Activated CD4-positive, alpha-beta T cell treated with anti-CD3 and anti-CD28 coated beads for 36 hours (primary cell): ENCODE measurements at regions of chr11 and their contacts with region 1.

Region 1: DNA sequence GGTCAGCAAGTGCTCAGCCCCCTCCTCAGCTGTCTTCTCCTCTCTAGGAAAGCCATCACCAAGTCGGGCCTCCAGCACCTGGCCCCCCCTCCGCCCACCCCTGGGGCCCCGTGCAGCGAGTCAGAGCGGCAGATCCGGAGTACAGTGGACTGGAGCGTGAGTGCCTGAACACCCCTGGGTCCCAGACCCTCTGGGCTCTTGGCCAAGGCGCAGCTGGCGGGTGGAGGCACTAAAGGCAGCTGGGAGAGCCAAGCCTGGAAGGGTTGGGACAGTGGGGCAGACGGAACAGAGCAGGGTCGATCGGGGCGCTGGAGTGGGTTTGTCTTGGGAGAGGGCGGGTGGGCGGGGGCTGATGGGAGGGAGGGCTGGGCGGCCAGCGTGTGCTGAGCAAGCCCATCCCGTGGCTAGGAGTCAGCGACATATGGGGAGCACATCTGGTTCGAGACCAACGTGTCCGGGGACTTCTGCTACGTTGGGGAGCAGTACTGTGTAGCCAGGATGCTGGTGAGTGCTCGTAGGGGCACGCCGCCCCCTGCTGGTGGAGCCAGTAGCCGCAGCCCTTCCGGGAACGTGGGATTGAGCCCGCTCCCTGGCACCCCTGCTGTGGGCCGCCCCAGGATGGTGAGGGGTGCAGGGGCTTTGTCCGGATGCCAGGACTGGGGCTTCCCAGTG is 14.1 kb upstream of the MDK start:
- DNase-seq: peak; percentile 87
- ATAC-seq: peak; percentile 86
- H3K4me3 Mint-ChIP-seq: no peak overlapping the region
- H3K27ac Mint-ChIP-seq: peak overlapping the region; percentile 83
- H3K4me1 Mint-ChIP-seq: peaks cover 30% of the 10 kb centered on the region
- H3K27me3 Mint-ChIP-seq: no peaks in the 10 kb centered on the region

Region 2: GRCh38 chr11:46210133-46210636 is 157.2 kb before region 1 on chr11:
- CTCF ChIA-PET with region 1: no interaction called
- POLR2A ChIA-PET with region 1: no interaction called
- intact Hi-C with region 1: no loop called
- DNase-seq: peak; percentile 8
- ATAC-seq: peak; percentile 64
- H3K4me3 Mint-ChIP-seq: no peak overlapping the region
- H3K27ac Mint-ChIP-seq: no peak overlapping the region
- H3K4me1 Mint-ChIP-seq: peaks cover 11% of the 10 kb centered on the region
- H3K27me3 Mint-ChIP-seq: no peaks in the 10 kb centered on the region

Region 3: DNA sequence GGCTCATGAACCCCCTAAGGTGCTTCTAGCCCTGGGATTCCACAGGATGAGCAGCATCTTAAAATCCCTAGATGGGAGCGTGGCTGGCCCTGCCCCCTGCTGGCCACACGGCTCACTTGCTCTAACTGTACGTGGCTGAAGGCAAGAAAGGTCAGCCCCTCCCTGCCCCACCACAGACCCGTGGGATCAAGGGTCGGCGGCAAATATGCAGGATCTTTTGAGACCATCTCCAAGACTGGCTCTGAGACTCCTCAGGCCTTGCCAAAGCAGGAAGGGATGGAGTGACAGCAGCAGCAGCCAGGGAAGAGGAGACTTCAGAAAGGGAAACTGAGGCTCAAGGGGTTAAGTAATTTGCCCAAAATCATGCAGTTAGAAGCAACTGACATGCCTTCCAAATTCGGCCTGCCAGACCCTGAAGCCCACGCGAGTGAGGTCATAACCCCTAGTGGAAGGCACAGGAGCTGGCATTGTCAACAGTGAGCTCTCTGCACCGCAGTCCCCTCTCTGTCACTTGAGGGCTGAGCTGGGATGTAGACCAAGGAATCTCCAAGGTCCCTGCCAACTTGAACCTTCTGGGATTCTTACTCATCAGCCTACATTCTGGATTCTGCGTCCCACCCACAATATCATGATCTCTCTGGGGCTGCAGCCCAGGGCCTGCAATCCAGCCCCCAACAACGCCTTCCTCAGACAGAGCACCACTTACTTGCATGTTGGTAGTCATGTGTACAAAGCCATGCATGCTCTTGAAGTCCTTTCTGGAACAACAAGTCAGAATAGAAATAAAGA is 58.6 kb before region 1 on chr11:
- CTCF ChIA-PET with region 1: no interaction called
- POLR2A ChIA-PET with region 1: no interaction called
- intact Hi-C with region 1: loop called in 1 of 2 experiments (anchors 10 kb)
- DNase-seq: peak; percentile 85
- ATAC-seq: peak; percentile 86
- H3K4me3 Mint-ChIP-seq: no peak overlapping the region
- H3K27ac Mint-ChIP-seq: no peak overlapping the region
- H3K4me1 Mint-ChIP-seq: peaks cover 5% of the 10 kb centered on the region
- H3K27me3 Mint-ChIP-seq: no peaks in the 10 kb centered on the region

Region 4: GRCh38 chr11:46332568-46333393 is 34.6 kb before region 1 on chr11:
- CTCF ChIA-PET with region 1: no interaction called
- POLR2A ChIA-PET with region 1: no interaction called
- intact Hi-C with region 1: no loop called
- DNase-seq: peak; percentile 75
- ATAC-seq: peak; percentile 18
- H3K4me3 Mint-ChIP-seq: peak overlapping the region; percentile 71
- H3K27ac Mint-ChIP-seq: peak overlapping the region; percentile 3
- H3K4me1 Mint-ChIP-seq: peaks cover 72% of the 10 kb centered on the region
- H3K27me3 Mint-ChIP-seq: no peaks in the 10 kb centered on the region

Region 5: GRCh38 chr11:46352063-46352841 is 15.1 kb before region 1 on chr11:
- CTCF ChIA-PET with region 1: interaction called, 141 read pairs
- POLR2A ChIA-PET with region 1: interaction called, 3 read pairs
- intact Hi-C with region 1: loop called (anchors 1 to 2 kb)
- DNase-seq: peak; percentile 88
- ATAC-seq: peak; percentile 39
- H3K4me3 Mint-ChIP-seq: peak overlapping the region; percentile 76
- H3K27ac Mint-ChIP-seq: peak overlapping the region; percentile 94
- H3K4me1 Mint-ChIP-seq: peaks cover 82% of the 10 kb centered on the region
- H3K27me3 Mint-ChIP-seq: no peaks in the 10 kb centered on the region

Region 6: GRCh38 chr11:46498179-46498578 is 130.8 kb after region 1 on chr11:
- CTCF ChIA-PET with region 1: no interaction called
- POLR2A ChIA-PET with region 1: no interaction called
- intact Hi-C with region 1: no loop called
- DNase-seq: no peak
- ATAC-seq: no peak
- H3K4me3 Mint-ChIP-seq: no peak overlapping the region
- H3K27ac Mint-ChIP-seq: no peak overlapping the region
- H3K4me1 Mint-ChIP-seq: peaks cover 5% of the 10 kb centered on the region
- H3K27me3 Mint-ChIP-seq: no peaks in the 10 kb centered on the region

Region 7: DNA sequence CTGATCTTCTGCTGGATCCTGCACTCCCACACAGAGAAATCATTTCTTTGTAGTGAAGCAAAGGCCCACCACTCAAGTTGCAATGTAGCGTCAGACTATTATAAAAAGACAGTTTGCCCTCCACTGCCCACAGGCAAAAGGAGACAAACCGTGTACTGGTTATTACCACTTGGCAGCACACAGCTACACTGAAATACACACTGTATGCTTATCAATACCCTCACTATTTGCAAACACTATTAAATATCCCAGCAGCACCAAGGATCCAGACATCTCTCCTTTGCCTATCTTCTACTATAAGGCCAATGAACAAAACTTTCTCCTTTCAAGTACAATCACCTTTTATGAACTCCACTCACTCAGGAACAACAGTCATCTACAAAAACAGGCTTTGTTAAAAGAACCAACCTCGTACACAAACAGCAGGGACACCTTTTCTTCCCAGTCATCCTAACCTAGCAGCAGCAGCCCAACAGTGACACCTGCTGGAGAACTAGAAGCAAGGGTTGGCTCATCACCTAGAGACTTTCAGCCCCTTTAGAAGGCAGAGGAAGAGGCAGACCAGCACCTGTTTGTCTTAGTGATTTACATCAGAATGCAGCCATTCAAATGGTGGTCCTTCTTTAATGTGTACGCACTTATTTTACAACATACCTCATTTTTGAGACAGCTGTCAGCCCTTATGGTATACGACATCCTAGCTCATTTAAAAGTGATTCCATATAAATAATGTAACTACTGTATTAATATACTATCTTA is 170.3 kb after region 1 on chr11:
- CTCF ChIA-PET with region 1: interaction called, 3 read pairs
- POLR2A ChIA-PET with region 1: no interaction called
- intact Hi-C with region 1: loop called in 1 of 2 experiments (anchors 1 kb)
- DNase-seq: peak; percentile 79
- ATAC-seq: peak; percentile 99
- H3K4me3 Mint-ChIP-seq: no peak overlapping the region
- H3K27ac Mint-ChIP-seq: peak overlapping the region; percentile 24
- H3K4me1 Mint-ChIP-seq: peaks cover 18% of the 10 kb centered on the region
- H3K27me3 Mint-ChIP-seq: no peaks in the 10 kb centered on the region

Region 8: DNA sequence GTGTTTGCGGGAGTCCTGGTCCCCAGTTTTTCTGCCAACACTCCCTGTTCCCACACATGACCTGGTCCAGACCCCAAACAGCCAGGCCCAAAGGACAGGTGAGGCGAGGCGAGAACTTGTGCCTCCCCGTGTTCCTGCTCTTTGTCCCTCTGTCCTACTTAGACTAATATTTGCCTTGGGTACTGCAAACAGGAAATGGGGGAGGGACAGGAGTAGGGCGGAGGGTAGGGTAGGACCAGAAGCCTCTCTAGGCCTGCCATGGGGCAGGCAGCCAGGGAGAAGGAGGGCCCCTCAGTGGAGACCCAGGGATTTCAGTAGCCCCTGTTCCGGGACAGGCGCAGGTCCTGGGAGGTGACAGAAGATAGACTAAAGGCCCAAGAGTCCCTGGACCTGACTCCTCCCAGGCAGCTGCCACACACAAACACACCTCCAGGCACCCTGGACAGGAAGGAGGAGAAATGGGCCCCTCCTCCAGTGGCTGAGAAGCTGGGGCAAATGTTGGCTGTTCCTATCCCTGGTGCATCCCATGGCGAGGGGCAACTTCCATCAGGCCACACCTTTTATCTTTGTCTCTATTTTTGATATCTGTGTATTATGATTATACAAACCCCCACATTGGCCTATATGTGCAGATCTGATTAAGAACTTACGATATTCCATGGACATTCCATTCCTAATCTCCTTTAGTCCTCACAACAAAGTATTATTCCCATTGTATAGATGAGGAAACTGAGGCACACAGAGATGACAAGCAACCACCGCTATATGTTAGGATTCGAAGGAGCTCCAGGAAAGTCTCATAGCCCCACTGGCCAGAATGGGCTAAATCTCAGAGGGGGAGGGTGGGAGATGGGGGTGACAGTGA is 351.0 kb after region 1 on chr11:
- CTCF ChIA-PET with region 1: no interaction called
- POLR2A ChIA-PET with region 1: no interaction called
- intact Hi-C with region 1: no loop called
- DNase-seq: no peak
- ATAC-seq: peak; percentile 30
- H3K4me3 Mint-ChIP-seq: no peak overlapping the region
- H3K27ac Mint-ChIP-seq: no peak overlapping the region
- H3K4me1 Mint-ChIP-seq: peaks cover 5% of the 10 kb centered on the region
- H3K27me3 Mint-ChIP-seq: no peaks in the 10 kb centered on the region